ENCODE measurements at regions of chr4 and their contacts with region 1.

Region 1: DNA sequence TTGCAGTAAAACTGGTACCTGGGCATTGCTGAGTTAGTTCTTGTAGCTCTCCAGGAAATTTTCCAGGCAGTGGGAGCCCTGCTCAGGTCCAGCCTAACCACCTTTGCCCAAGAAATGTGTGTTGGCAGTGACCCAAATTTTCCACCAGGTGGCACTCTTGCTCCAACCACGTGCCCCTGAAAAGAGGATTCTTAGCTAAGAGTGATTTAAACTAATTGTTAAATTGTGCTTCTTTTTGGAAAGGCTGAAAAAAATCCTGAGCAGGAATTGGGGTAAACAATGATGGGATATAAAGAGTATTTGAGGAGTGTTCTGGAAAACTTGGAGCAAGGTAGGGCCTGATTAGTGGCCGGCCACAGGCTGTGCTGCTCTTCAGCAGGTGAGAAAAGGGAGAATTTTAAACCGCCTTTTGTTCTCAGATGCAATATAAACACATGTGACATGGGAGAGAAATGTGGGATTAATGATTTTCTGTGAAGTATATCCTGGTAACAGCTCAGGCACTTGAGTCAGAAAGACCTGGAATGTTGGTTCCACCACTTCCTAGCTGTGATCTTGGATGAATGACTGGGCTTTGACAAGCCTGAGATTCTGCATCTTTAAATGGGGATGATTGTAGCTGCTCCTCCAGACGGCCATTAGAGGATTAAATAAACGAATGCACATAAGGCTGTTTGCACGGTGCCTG is 219.6 kb downstream of the PTTG2 start:
- DNase-seq: peak; percentile 76
- H3K4me3 ChIP-seq: peak overlapping the region in 1 of 2 experiments; percentile 40; a peak in 1 of 4 replicates
- H3K27ac ChIP-seq: peak overlapping the region in 1 of 2 experiments; percentile 42; a peak in 2 of 4 replicates
- H3K4me1 ChIP-seq: peaks cover 1 to 6% of the 10 kb centered on the region in 2 experiments; a peak in 3 of 4 replicates
- H3K27me3 ChIP-seq: no peaks in the 10 kb centered on the region
- CTCF ChIP-seq: peak; percentile 96
- EP300 ChIP-seq: no peak
- RAD21 ChIP-seq: peak; percentile 97

Region 2: GRCh38 chr4:38062088-38062893 is 117.5 kb before region 1 on chr4:
- CTCF ChIA-PET with region 1: interaction called, 62 read pairs
- POLR2A ChIA-PET with region 1: no interaction called
- DNase-seq: peak; percentile 71
- H3K4me3 ChIP-seq: peak overlapping the region; percentile 17 to 49; a peak in 2 of 4 replicates
- H3K27ac ChIP-seq: peak overlapping the region; percentile 78 to 89; a peak in 3 of 4 replicates
- H3K4me1 ChIP-seq: peaks cover 11 to 35% of the 10 kb centered on the region in 2 experiments; a peak in 3 of 4 replicates
- H3K27me3 ChIP-seq: no peaks in the 10 kb centered on the region
- CTCF ChIP-seq: peak; percentile 87
- EP300 ChIP-seq: no peak
- RAD21 ChIP-seq: peak; percentile 91

Region 3: DNA sequence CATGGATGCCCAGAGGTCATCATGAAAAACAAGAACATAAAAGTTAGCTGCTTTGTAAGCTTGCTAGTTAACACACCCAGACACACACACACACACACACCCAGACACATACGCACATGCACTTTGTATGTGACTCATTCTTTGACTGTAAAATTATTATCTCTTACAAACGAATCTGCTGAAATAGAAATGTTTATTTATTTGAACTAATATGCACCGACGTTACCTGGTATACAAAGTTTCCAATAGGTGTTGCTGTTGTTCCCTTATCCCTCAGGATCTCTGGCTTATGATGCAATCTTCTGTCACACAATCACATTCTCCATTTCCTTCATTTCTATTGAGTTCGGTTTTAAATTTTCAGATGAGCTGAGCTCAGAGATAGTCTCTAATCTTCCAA is 10.3 kb before region 1 on chr4:
- CTCF ChIA-PET with region 1: interaction called, 15 read pairs
- POLR2A ChIA-PET with region 1: no interaction called
- DNase-seq: no peak
- H3K4me3 ChIP-seq: no peak overlapping the region
- H3K27ac ChIP-seq: no peak overlapping the region
- H3K4me1 ChIP-seq: peaks cover 0 to 3% of the 10 kb centered on the region in 2 experiments; a peak in 3 of 4 replicates
- H3K27me3 ChIP-seq: no peaks in the 10 kb centered on the region
- CTCF ChIP-seq: no peak
- EP300 ChIP-seq: no peak
- RAD21 ChIP-seq: no peak

Region 4: GRCh38 chr4:38675146-38676121 is 495.6 kb after region 1 on chr4:
- CTCF ChIA-PET with region 1: interaction called, 73 read pairs
- POLR2A ChIA-PET with region 1: no interaction called
- DNase-seq: peak; percentile 73
- H3K4me3 ChIP-seq: peak overlapping the region in 1 of 2 experiments; percentile 29; a peak in 1 of 4 replicates
- H3K27ac ChIP-seq: peak overlapping the region; percentile 51 to 85; a peak in 3 of 4 replicates
- H3K4me1 ChIP-seq: peaks cover 46 to 55% of the 10 kb centered on the region in 2 experiments
- H3K27me3 ChIP-seq: no peaks in the 10 kb centered on the region
- CTCF ChIP-seq: peak; percentile 97
- EP300 ChIP-seq: no peak
- RAD21 ChIP-seq: peak; percentile 98

Region 5: GRCh38 chr4:38723726-38724474 is 544.1 kb after region 1 on chr4:
- CTCF ChIA-PET with region 1: interaction called, 182 read pairs
- POLR2A ChIA-PET with region 1: no interaction called
- DNase-seq: no peak
- H3K4me3 ChIP-seq: no peak overlapping the region
- H3K27ac ChIP-seq: no peak overlapping the region
- H3K4me1 ChIP-seq: no peaks in the 10 kb centered on the region
- H3K27me3 ChIP-seq: no peaks in the 10 kb centered on the region
- CTCF ChIP-seq: no peak
- EP300 ChIP-seq: no peak
- RAD21 ChIP-seq: no peak

Region 6: DNA sequence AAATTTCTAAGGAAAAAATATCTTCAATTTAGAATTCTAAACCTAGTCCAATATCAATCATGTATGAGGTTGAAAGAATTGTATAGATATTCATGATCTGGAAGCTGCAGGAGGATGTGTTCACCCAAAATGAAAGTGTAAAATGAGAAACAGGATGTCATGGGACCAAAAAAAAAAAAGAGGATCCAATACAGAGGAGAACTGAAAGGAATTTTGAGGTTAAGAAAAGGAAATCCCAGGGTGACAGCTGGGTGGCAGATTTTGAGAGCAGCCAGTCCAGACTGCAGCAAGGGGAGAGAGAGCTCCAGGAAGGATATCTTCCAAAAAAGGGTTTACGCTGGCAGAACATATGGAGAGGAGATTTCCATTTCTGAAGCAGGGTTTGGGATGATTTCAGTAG is 564.0 kb after region 1 on chr4:
- CTCF ChIA-PET with region 1: interaction called, 12 read pairs
- POLR2A ChIA-PET with region 1: no interaction called
- DNase-seq: no peak
- H3K4me3 ChIP-seq: no peak overlapping the region
- H3K27ac ChIP-seq: no peak overlapping the region
- H3K4me1 ChIP-seq: no peaks in the 10 kb centered on the region
- H3K27me3 ChIP-seq: no peaks in the 10 kb centered on the region
- CTCF ChIP-seq: no peak
- EP300 ChIP-seq: no peak
- RAD21 ChIP-seq: no peak

Region 7: DNA sequence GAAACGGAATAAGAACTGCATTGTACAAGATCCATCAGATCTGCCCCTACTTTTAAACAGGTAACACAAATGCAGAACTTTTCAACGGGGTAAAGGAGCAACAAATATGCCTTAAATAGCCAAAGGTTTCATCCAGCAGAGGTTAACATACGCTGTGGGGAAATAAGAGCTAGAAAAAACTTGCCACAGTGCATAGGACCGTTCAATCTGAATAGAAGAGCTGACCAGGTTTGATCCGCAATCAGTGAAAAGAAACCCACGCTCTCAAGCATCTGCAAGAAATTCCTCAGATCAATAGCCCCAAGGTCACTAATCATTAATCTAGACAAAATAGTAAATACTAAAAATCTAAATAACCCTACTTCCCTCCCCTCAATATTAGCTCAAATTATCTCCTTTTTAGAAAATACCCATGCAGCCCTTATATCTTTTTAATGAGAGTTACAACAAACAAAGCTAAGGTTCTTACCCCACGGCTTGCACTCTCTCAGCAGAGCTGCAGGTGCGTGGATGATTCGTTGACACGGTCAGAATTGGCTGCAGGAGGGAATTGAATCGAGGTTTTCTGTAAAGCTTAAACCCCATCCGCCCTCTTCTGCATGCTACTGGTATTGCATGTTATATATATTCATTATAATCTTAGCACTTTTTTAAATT is 602.7 kb after region 1 on chr4 and contains the start of gene TLR10:
- CTCF ChIA-PET with region 1: interaction called, 50 read pairs
- POLR2A ChIA-PET with region 1: no interaction called
- DNase-seq: peak; percentile 53
- H3K4me3 ChIP-seq: peak within 1 kb of the TSS in 1 of 2 experiments; percentile 26; a peak in 1 of 4 replicates
- H3K27ac ChIP-seq: no peak within 1 kb of the TSS
- H3K4me1 ChIP-seq: no peaks in the 10 kb centered on the region
- H3K27me3 ChIP-seq: peaks cover 5% of the 10 kb centered on the region; the same call in 1 of the 2 replicates
- CTCF ChIP-seq: peak; percentile 67
- EP300 ChIP-seq: no peak
- RAD21 ChIP-seq: peak; percentile 72
- polyA plus RNA-seq, gene TLR10: not detected in 2 replicates

Measured in SK-N-SH (cell line).